GM10248 (cell line): ENCODE measurements at regions of chr4 and their contacts with region 1.

Region 1: GRCh38 chr4:83455281-83456129 is at the starts of genes HELQ and MRPS18C:
- DNase-seq: peak; percentile 95
- CTCF ChIP-seq: no peak

Region 2: GRCh38 chr4:83440899-83441298 is 14.6 kb before region 1 on chr4:
- CTCF ChIA-PET with region 1: interaction called, 15 read pairs
- POLR2A ChIA-PET with region 1: interaction called, 7 read pairs
- DNase-seq: peak; percentile 17
- CTCF ChIP-seq: no peak

Region 3: DNA sequence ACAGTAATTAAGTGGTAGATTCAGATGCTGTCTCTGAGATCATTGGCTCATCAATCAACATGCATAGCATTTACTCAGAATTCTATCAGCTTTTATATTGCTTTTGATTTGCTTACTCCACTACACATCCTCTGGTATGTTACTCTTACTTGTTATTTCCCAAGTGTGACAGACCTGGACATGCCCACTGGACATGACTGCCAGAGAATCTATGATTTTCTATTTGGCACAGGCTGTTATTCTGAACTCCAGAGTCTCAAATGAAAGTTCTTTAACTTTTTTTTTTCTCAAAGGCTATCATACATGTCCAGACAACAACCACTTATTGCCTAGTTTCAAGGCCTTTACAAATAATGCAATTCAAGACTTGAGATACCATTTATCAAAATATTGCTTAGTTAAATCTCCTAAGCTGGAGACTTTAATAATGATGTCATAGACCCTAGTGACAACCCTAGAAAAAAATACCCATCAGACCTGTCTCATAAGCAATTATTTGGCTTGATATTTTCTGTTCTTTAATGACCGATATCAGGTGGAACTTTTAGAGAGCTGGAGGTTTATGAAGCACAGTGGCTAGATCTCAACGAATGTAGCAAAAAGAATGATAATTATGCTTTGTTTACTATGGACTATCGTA is 1903.4 kb after region 1 on chr4:
- CTCF ChIA-PET with region 1: no interaction called
- POLR2A ChIA-PET with region 1: interaction called, 10 read pairs
- DNase-seq: no peak
- CTCF ChIP-seq: no peak